ENCODE measurements at regions of chr15 and their contacts with region 1.

Region 1: GRCh38 chr15:77944002-77944867 is 133.3 kb downstream of the TBC1D2B start:
- DNase-seq: peak; percentile 88 to 94 (median 91)
- ATAC-seq: peak; percentile 86 to 96 (median 92)
- H3K4me3 ChIP-seq: peak overlapping the region; percentile 38 to 84 (median 60)
- H3K27ac ChIP-seq: peak overlapping the region; percentile 22 to 92 (median 82)
- H3K4me1 ChIP-seq: peaks cover 0 to 11% (median 2%) of the 10 kb centered on the region in 12 donors
- H3K27me3 ChIP-seq: no peaks in the 10 kb centered on the region
- CTCF ChIP-seq: no peak
- POLR2A ChIP-seq: no peak

Region 2: GRCh38 chr15:77864278-77865078 is 79.8 kb before region 1 on chr15:
- intact Hi-C with region 1: no loop called
- DNase-seq: peak in 1 of 5 donors; percentile 4
- ATAC-seq: no peak
- H3K4me3 ChIP-seq: no peak overlapping the region
- H3K27ac ChIP-seq: no peak overlapping the region
- H3K4me1 ChIP-seq: no peaks in the 10 kb centered on the region
- H3K27me3 ChIP-seq: no peaks in the 10 kb centered on the region
- CTCF ChIP-seq: no peak
- POLR2A ChIP-seq: no peak

Region 3: DNA sequence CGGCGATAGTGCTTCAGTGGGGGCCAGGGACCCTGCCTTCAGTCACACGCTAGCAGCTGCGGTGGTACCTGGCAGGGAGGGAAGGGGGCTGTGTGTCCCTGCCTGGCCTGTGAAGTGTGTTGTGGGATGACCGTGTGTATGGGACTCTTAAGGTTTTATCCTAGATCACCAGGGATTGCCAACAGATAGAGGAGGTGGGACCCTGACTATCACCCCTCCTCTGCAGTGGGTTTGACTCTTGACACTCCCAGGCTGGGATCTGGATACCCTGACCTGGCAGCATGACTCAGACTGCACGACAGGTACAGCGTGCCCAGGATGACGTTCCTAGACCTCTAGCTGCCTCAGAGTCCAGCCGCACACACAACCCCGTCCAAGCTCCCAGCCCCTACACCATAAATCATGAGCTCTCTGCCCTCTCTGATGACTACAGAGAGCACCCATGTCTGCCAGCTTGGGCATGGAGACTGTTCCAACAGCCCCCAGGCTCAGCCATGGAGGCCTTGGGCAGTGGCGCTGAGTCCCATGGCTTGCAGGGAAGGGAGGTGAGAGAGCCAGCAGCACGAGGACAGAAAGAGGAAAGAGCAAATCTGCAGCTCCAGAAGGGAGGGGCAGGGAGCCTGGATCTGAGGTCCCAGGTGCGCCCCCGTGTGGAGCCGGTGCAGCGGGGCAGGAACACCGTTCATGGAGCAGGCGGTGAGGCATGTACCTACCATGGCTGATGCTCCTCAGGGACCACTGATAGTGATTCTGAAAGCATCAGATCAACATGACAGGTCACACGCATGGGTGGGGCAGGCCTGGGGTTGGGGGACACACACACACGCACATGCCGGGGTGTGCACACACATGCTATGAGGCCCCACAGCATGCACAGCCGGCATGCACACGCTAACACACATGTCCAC is 796.0 kb after region 1 on chr15:
- intact Hi-C with region 1: loop called in 1 of 10 experiments (anchors 10 kb)
- DNase-seq: peak in 2 of 5 donors; percentile 59 to 66
- ATAC-seq: peak; percentile 26 to 65 (median 61)
- H3K4me3 ChIP-seq: no peak overlapping the region
- H3K27ac ChIP-seq: no peak overlapping the region
- H3K4me1 ChIP-seq: peaks cover 0 to 4% (median 0%) of the 10 kb centered on the region in 12 donors
- H3K27me3 ChIP-seq: no peaks in the 10 kb centered on the region
- CTCF ChIP-seq: peak in 10 of 12 donors; percentile 9 to 51 (median 34)
- POLR2A ChIP-seq: no peak

Measured in heart left ventricle (tissue), 16 donors.